Activated CD4-positive, alpha-beta memory T cell treated with anti-CD3 and anti-CD28 coated beads, Interleukin-2, amount 10 ng/mL, durations not matched to agents 7 days and 5 days (primary cell): ENCODE measurements at regions of chr2 and their contacts with region 1.

Region 1: GRCh38 chr2:222973237-222973636 is 78.8 kb upstream of the KCNE4 start:
- DNase-seq: no peak
- H3K4me3 Mint-ChIP-seq: no peak overlapping the region
- H3K27ac Mint-ChIP-seq: no peak overlapping the region
- H3K4me1 Mint-ChIP-seq: no peaks in the 10 kb centered on the region
- H3K27me3 Mint-ChIP-seq: peaks cover 3% of the 10 kb centered on the region

Region 2: GRCh38 chr2:222959336-222959735 is 13.9 kb before region 1 on chr2:
- CTCF ChIA-PET with region 1: interaction called, 19 read pairs
- POLR2A ChIA-PET with region 1: no interaction called
- DNase-seq: no peak
- H3K4me3 Mint-ChIP-seq: no peak overlapping the region
- H3K27ac Mint-ChIP-seq: no peak overlapping the region
- H3K4me1 Mint-ChIP-seq: no peaks in the 10 kb centered on the region
- H3K27me3 Mint-ChIP-seq: peaks cover 22% of the 10 kb centered on the region

Region 3: GRCh38 chr2:222998459-222998858 is 25.2 kb after region 1 on chr2:
- CTCF ChIA-PET with region 1: no interaction called
- POLR2A ChIA-PET with region 1: no interaction called
- DNase-seq: no peak
- H3K4me3 Mint-ChIP-seq: no peak overlapping the region
- H3K27ac Mint-ChIP-seq: no peak overlapping the region
- H3K4me1 Mint-ChIP-seq: no peaks in the 10 kb centered on the region
- H3K27me3 Mint-ChIP-seq: peaks cover 6% of the 10 kb centered on the region

Region 4: DNA sequence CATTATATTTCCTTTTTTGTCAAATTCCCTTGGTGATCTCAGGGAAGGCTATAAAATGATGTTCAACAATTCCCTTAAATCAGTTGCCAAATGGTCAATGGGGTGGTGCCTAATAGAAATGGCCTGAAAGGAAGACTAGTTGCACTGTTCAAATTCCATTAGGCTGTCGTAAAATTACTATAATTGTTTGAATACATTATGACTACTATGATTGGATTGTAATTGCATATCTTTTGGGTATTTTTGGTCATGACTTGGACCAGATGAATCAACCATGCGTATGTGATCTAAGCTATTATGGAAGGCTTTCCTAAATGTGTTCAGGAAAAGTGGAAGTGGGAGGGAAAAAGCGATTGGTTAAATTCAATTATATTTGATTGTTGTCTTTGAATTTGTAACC is 37.4 kb after region 1 on chr2:
- CTCF ChIA-PET with region 1: no interaction called
- POLR2A ChIA-PET with region 1: no interaction called
- DNase-seq: no peak
- H3K4me3 Mint-ChIP-seq: no peak overlapping the region
- H3K27ac Mint-ChIP-seq: no peak overlapping the region
- H3K4me1 Mint-ChIP-seq: no peaks in the 10 kb centered on the region
- H3K27me3 Mint-ChIP-seq: peaks cover 2% of the 10 kb centered on the region

Region 5: GRCh38 chr2:223123855-223124610 is 150.8 kb after region 1 on chr2:
- CTCF ChIA-PET with region 1: no interaction called
- POLR2A ChIA-PET with region 1: no interaction called
- DNase-seq: no peak
- H3K4me3 Mint-ChIP-seq: no peak overlapping the region
- H3K27ac Mint-ChIP-seq: no peak overlapping the region
- H3K4me1 Mint-ChIP-seq: no peaks in the 10 kb centered on the region
- H3K27me3 Mint-ChIP-seq: no peaks in the 10 kb centered on the region